ENCODE measurements at regions of chr2 and their contacts with region 1.

Region 1: DNA sequence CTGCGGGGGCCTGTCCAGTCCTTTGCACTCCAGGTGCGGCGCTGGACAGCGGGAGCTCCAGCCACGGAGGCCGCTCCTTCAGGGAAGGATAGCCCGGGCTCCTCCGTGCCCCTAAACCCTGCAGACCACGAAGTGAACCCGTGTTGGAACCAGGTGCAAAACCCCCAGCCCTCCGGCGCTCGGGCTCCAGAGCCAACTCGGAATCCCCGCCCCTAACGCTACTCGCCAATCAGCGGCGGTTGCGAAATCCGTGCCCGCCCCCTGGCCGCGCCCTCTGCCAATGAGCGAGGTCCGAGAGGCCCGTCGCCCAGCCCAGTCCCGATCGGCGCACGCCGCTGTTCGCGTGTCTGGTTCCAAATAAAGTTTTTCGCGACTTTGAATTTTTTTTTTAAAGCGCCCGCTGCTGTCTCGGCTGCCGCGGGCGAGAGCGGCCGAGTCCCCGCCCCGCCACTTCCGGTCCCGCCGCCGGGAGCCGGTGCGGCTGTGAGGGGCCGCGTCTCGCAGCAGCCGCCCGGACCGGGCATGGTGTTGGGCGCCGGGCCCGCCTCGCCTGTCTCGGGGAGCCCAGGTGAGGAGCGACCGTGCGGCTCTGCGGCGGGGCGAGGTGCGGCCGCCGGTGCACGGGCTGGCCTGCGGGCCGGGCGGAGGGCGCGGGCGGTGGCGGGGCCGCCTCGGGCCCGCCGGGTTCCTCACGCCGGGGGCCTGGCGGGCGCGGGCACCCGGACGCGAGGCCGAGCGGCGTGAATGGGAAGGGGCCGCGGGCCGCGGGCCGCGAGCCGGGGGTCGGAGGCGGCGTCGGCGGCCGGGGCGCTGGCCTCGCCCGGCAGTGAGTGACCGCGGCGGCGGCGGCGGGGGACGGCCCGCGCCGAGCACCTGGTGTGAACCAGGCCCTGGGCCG is at the start of gene UBE2F:
- DNase-seq: peak; percentile 96 to 98 (median 98)
- H3K4me3 ChIP-seq: peak within 1 kb of the TSS; percentile 66
- H3K27ac ChIP-seq: peak within 1 kb of the TSS in 1 of 2 donors; percentile 14
- H3K4me1 ChIP-seq: peaks cover 9% of the 10 kb centered on the region
- H3K27me3 ChIP-seq: no peaks in the 10 kb centered on the region
- CTCF ChIP-seq: no peak
- EP300 ChIP-seq: no peak
- POLR2A ChIP-seq: peak; percentile 68
- total RNA-seq, gene UBE2F: 20.3 to 44.0 (median 23.8) TPM

Region 2: DNA sequence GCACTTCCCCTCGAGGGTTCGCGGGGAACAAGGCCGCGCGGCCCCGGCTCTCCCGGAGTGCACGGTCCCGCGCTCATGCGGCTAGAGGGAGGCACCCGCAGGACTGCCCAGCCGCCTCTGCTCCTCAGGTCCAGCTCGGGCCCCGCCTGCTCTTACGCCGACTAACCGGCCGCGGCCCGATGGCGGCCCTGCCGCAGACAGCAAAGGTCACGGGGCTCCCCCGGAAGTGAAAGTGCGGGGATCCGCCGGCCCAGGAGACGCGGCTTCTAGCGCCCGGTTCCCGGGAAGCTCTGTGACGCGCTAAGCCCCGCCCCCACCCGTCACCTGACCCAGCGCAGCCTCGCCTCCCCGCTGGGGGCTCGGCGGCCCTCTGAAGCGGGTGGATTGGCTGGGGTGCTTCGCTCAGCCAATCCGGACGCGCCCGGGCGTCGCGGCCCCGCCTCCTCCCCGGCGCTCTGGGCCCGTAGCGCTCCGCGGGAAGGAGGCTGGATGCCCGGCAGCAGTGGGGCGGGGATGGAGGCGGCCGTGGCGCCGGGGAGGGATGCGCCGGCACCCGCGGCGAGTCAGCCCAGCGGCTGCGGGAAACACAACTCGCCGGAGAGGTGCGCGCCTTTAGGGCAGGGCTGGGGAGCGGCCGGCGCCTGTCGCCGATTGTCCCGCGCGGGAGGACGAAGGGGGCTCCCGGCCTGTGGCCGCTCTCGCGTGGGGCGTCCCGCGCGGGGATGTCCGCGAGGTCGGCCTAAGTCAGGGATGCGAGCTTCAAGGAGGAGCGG is 93.9 kb after region 1 on chr2 and contains the start of gene SCLY:
- intact Hi-C with region 1: loop called in 1 of 4 experiments (anchors 5 kb)
- DNase-seq: peak; percentile 97 to 98 (median 97)
- H3K4me3 ChIP-seq: peak within 1 kb of the TSS; percentile 94
- H3K27ac ChIP-seq: peak within 1 kb of the TSS; percentile 71 to 73
- H3K4me1 ChIP-seq: no peaks in the 10 kb centered on the region
- H3K27me3 ChIP-seq: no peaks in the 10 kb centered on the region
- CTCF ChIP-seq: no peak
- EP300 ChIP-seq: no peak
- POLR2A ChIP-seq: peak; percentile 82
- total RNA-seq, gene SCLY: 7.3 to 17.5 (median 12.5) TPM

Region 3: DNA sequence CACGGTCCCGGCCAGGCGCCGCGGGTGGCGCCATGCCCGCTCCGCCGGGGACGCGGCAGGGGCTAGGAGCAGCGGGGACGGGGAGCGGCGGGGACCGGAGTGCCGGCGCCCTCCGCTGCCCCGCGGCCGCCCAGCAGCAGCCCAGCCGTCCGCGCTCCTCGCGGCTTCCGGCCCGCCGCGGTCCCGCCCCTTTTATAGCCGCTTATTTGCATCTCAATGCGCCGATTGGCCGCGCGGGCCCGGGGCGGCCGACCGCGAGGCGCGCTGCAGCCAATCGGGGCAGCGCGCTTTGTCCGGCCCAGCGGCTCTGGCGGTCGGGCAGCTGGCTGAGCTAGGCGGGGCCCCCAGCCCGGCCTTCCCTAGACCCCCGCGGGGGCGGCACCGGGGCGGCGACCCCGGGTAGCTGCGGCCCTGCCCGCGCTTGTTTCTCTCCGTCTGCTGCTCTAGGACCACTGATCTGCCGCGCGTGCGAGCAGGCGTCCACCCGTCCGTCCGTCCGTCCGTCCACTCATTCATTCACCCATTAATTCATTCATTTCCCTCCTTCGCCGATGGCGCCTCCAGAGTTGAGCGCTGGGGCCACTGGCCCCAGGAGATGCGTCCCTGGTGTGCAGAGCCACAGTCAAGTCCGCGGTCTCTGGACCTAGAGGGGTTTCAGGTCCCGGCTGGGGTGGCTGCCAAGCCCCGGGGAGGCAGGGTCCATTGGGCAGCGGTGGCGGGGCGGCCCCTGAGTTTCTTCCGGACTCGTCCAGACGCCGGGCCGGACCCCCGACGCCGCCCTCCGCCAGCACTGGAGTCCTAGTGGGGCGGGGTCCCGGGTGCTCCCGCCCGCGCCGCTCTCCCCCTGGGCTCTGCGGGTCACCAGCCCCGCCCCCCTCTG is 273.3 kb after region 1 on chr2 and contains the start of gene HES6:
- intact Hi-C with region 1: loop called in 1 of 4 experiments (anchors 10 kb)
- DNase-seq: peak; percentile 79 to 90 (median 85)
- H3K4me3 ChIP-seq: peak within 1 kb of the TSS; percentile 50
- H3K27ac ChIP-seq: no peak within 1 kb of the TSS
- H3K4me1 ChIP-seq: peaks cover 2% of the 10 kb centered on the region
- H3K27me3 ChIP-seq: no peaks in the 10 kb centered on the region
- CTCF ChIP-seq: peak in 1 of 3 donors; percentile 35
- EP300 ChIP-seq: no peak
- POLR2A ChIP-seq: peak; percentile 70
- total RNA-seq, gene HES6: 1.1 to 12.4 (median 3.1) TPM

Region 4: GRCh38 chr2:238370823-238371372 is 404.1 kb after region 1 on chr2:
- intact Hi-C with region 1: no loop called
- DNase-seq: peak; percentile 52 to 67 (median 63)
- H3K4me3 ChIP-seq: no peak overlapping the region
- H3K27ac ChIP-seq: no peak overlapping the region
- H3K4me1 ChIP-seq: peaks cover 3% of the 10 kb centered on the region
- H3K27me3 ChIP-seq: no peaks in the 10 kb centered on the region
- CTCF ChIP-seq: peak in 2 of 3 donors; percentile 43 to 66
- EP300 ChIP-seq: no peak
- POLR2A ChIP-seq: no peak